ENCODE measurements at regions of chr14 and their contacts with region 1.

Region 1: GRCh38 chr14:36373982-36374673 is 53.7 kb upstream of the MBIP start:
- DNase-seq: peak; percentile 74 to 92 (median 84)
- H3K4me3 ChIP-seq: no peak overlapping the region
- H3K27ac ChIP-seq: no peak overlapping the region
- H3K4me1 ChIP-seq: no peaks in the 10 kb centered on the region
- H3K27me3 ChIP-seq: no peaks in the 10 kb centered on the region
- CTCF ChIP-seq: peak; percentile 69 to 86 (median 80)
- POLR2A ChIP-seq: no peak

Region 2: DNA sequence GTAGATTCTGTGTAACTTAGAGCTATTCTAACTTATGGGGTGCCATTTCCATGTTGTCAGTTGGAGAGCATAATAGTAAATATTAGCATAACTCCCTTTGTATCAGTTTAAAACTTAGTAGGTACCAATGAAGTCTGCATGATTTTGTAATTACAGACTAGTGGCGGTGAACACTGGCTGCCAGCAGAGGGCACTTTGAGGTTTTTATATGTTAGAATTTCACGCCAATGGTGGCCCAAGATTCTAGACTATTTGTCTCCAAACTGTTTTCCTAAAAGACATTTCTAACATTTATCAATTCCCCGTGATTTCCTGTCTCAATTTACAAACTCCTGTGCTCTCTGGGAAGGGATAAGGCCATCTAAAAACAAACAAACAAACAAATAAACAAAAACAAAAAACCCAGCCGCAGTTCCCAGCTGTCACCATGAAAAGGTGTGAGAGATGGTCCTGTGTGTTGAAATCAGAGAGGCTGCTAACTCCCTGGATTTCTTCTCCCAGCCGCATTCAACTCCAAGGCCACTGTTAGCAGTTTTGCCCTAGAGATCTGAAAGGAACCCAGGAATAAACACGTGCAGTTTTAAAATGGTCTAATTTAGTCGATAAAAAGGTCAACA is 490.3 kb before region 1 on chr14:
- intact Hi-C with region 1: loop called (anchors 5 kb)
- DNase-seq: peak in 5 of 7 donors; percentile 26 to 70 (median 50)
- H3K4me3 ChIP-seq: peak overlapping the region in 1 of 4 donors; percentile 37
- H3K27ac ChIP-seq: no peak overlapping the region
- H3K4me1 ChIP-seq: peaks cover 9% of the 10 kb centered on the region in 2 donors
- H3K27me3 ChIP-seq: no peaks in the 10 kb centered on the region
- CTCF ChIP-seq: peak; percentile 40 to 70 (median 58)
- POLR2A ChIP-seq: no peak

Region 3: GRCh38 chr14:36070031-36070719 is 304.0 kb before region 1 on chr14:
- intact Hi-C with region 1: loop called in 1 of 2 experiments (anchors 10 kb)
- DNase-seq: peak; percentile 42 to 82 (median 68)
- H3K4me3 ChIP-seq: no peak overlapping the region
- H3K27ac ChIP-seq: no peak overlapping the region
- H3K4me1 ChIP-seq: peaks cover 0 to 5% of the 10 kb centered on the region in 2 donors
- H3K27me3 ChIP-seq: no peaks in the 10 kb centered on the region
- CTCF ChIP-seq: peak; percentile 46 to 63 (median 54)
- POLR2A ChIP-seq: no peak

Region 4: GRCh38 chr14:36271939-36272907 is 101.9 kb before region 1 on chr14:
- intact Hi-C with region 1: no loop called
- DNase-seq: no peak
- H3K4me3 ChIP-seq: peak overlapping the region in 1 of 4 donors; percentile 37
- H3K27ac ChIP-seq: no peak overlapping the region
- H3K4me1 ChIP-seq: no peaks in the 10 kb centered on the region
- H3K27me3 ChIP-seq: peaks cover 5% of the 10 kb centered on the region
- CTCF ChIP-seq: no peak
- POLR2A ChIP-seq: no peak